HepG2 (cell line): ENCODE measurements at regions of chr19 and their contacts with region 1.

Region 1: GRCh38 chr19:4803736-4804695 is 12.5 kb downstream of the FEM1A start:
- DNase-seq: peak; percentile 66
- ATAC-seq: peak; percentile 87
- H3K4me3 ChIP-seq: peak overlapping the region in 1 of 3 experiments; percentile 40; a peak in 1 of 6 replicates
- H3K27ac ChIP-seq: no peak overlapping the region
- H3K4me1 ChIP-seq: peaks cover 29% of the 10 kb centered on the region
- H3K27me3 ChIP-seq: no peaks in the 10 kb centered on the region
- CTCF ChIP-seq: peak; percentile 95
- EP300 ChIP-seq: no peak
- POLR2A ChIP-seq: no peak
- RAD21 ChIP-seq: peak; percentile 96

Region 2: GRCh38 chr19:4732680-4733114 is 71.3 kb before region 1 on chr19:
- CTCF ChIA-PET with region 1: interaction called, 59 read pairs
- POLR2A ChIA-PET with region 1: no interaction called
- in situ Hi-C with region 1: no loop called
- intact Hi-C with region 1: no loop called
- DNase-seq: peak; percentile 63
- ATAC-seq: peak; percentile 76
- H3K4me3 ChIP-seq: no peak overlapping the region
- H3K27ac ChIP-seq: no peak overlapping the region
- H3K4me1 ChIP-seq: peaks cover 32% of the 10 kb centered on the region
- H3K27me3 ChIP-seq: peaks cover 0 to 6% of the 10 kb centered on the region in 2 experiments; a peak in 1 of 5 replicates
- CTCF ChIP-seq: peak; percentile 89
- EP300 ChIP-seq: no peak
- POLR2A ChIP-seq: no peak
- RAD21 ChIP-seq: peak; percentile 82

Region 3: GRCh38 chr19:4815426-4816201 is 11.6 kb after region 1 on chr19:
- CTCF ChIA-PET with region 1: no interaction called
- POLR2A ChIA-PET with region 1: no interaction called
- in situ Hi-C with region 1: no loop called
- intact Hi-C with region 1: no loop called
- DNase-seq: peak; percentile 93
- ATAC-seq: peak; percentile 82
- H3K4me3 ChIP-seq: peak overlapping the region in 1 of 3 experiments; percentile 27; a peak in 1 of 6 replicates
- H3K27ac ChIP-seq: peak overlapping the region; percentile 45
- H3K4me1 ChIP-seq: peaks cover 37% of the 10 kb centered on the region
- H3K27me3 ChIP-seq: no peaks in the 10 kb centered on the region
- CTCF ChIP-seq: no peak
- EP300 ChIP-seq: no peak
- POLR2A ChIP-seq: no peak; a peak in 1 of 4 replicates
- RAD21 ChIP-seq: no peak

Region 4: DNA sequence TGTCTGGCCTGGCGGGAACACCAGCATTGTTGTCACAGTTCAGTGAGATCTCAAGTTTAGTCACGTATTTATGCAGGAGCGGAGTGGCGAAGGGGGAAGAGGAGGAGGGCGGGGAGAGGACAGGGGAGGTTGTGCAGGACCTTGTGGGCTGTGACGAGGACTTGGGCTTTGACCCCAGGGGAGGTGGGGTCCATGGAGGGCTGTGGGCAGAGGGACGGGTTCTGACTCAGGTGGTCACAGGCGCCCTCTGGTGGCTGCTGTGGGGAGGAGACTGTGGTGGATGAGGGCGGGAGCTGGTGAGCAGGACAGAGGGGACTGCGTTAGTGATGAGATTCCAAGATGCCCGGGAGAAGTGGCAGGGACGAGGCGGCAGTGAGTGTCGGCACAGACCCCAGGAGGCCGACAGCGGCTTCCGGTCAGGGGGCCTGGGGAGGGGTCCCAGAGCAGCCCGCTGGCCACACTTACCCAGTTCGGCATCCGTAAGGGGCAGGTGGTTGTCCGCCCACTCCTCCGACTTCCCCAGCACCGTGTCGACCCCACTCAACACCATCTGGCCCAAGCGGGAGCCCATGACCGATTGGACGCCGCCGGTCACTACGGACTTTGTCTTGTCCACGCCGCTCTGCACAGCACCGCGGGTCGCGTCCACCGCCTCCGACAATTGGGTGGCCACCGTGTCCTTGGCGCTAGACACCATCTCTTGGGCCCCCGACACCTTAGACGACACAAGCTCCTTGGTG is 47.7 kb after region 1 on chr19:
- CTCF ChIA-PET with region 1: interaction called, 33 read pairs
- POLR2A ChIA-PET with region 1: interaction called, 11 read pairs
- in situ Hi-C with region 1: loop called (anchors 5 kb)
- intact Hi-C with region 1: loop called (anchors 1 kb)
- DNase-seq: peak; percentile 85
- ATAC-seq: peak; percentile 96
- H3K4me3 ChIP-seq: no peak overlapping the region
- H3K27ac ChIP-seq: peak overlapping the region; percentile 38
- H3K4me1 ChIP-seq: peaks cover 11% of the 10 kb centered on the region
- H3K27me3 ChIP-seq: no peaks in the 10 kb centered on the region
- CTCF ChIP-seq: peak; percentile 98
- EP300 ChIP-seq: 0 out of 4 replicates have a peak, but pooled peaks of 1 of the 2 experiments have one; percentile 15
- POLR2A ChIP-seq: no peak
- RAD21 ChIP-seq: peak; percentile 92

Region 5: GRCh38 chr19:4904481-4904880 is 100.5 kb after region 1 on chr19:
- CTCF ChIA-PET with region 1: no interaction called
- POLR2A ChIA-PET with region 1: no interaction called
- in situ Hi-C with region 1: no loop called
- intact Hi-C with region 1: no loop called
- DNase-seq: peak; percentile 47
- ATAC-seq: peak; percentile 14; the same call in 2 of the 3 replicates
- H3K4me3 ChIP-seq: no peak overlapping the region
- H3K27ac ChIP-seq: no peak overlapping the region
- H3K4me1 ChIP-seq: peaks cover 60% of the 10 kb centered on the region
- H3K27me3 ChIP-seq: no peaks in the 10 kb centered on the region
- CTCF ChIP-seq: no peak
- EP300 ChIP-seq: peak in 1 of 2 experiments; percentile 40; a peak in 1 of 4 replicates
- POLR2A ChIP-seq: no peak
- RAD21 ChIP-seq: no peak